ENCODE measurements at regions of chr6 and their contacts with region 1.

Region 1: GRCh38 chr6:166005944-166006899 is 161.4 kb downstream of the TBXT start:
- DNase-seq: peak; percentile 73
- ATAC-seq: peak; percentile 72 to 84

Region 2: DNA sequence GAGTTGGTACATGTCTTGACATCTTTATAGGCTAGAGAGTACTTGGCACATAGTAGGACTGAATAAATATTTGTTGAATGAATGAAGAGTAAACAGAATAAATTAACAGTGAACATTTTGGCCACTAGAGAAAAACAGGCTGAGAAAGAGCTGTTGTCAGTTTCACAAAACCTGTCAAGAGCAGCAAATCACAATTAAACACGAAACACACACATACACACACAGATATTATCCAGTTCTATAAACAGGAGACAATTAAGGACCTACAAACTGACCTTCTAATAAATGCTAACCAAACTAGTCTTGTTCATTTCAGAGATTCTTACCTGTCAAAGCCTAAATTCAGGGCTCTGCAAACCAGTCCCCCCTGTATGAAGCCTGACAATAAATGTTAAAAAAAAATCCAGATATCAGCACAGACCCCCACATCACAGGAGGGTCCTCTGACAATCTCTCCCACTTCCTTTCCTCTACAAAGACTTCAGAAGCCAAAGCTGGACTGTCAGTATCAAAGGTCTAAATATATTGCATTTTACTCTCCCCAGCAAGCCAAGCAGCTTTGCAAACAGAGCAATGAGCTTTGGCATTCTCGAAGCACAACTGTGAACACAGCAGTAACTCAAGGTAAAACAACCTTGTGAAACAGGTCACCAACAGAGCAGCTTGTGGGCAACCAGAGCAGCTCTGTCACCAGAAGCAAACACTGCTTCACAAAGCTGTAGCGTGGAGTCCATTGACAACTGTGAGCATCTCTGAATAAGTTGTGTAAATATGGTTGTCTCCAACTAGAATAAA is 68.5 kb before region 1 on chr6:
- intact Hi-C with region 1: no loop called
- DNase-seq: no peak
- ATAC-seq: no peak

Region 3: GRCh38 chr6:165950316-165950715 is 55.9 kb before region 1 on chr6:
- intact Hi-C with region 1: no loop called
- DNase-seq: no peak
- ATAC-seq: no peak

Region 4: DNA sequence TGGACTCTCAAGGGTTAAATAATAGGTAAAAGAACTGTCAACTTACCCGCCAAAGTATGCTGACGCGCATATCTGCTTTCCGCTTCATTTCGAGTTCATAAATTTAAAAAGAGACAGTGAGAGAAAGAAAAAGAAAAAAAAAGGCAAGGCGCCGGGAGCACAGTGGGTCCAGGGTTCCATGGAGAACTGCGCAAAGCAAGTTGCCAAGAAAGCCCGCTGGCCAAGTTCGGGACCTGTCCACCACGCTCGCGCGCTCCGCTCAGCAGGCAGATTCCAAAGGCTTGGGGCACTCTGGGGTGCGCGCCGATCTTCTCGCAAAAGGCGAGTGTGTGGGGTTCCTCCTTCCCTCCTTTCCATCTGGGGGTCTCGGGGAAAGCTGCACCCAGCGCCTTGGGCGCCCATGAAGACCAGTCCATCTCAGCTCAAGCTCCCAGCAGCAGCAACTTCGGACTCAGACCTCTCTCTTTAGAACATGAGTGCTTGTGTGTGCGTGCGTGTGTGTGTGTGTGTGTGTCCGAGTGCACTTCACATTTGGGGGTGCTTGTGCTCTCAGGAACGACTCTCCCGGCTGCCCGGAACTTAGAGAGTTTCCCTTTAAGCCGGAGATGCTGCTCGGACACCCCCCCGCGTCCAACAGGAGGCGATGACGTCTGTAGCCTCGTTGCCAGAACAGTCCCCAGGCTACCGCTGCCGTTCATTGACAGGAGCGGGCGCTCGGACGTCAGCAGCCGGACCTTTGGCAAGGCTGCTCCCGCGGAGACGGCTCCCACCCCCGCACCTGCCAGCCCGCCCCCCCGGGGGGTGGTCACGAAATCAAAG is 18.5 kb before region 1 on chr6:
- intact Hi-C with region 1: loop called in 1 of 2 experiments (anchors 1 kb)
- DNase-seq: peak; percentile 90
- ATAC-seq: peak; percentile 88 to 90

Region 5: DNA sequence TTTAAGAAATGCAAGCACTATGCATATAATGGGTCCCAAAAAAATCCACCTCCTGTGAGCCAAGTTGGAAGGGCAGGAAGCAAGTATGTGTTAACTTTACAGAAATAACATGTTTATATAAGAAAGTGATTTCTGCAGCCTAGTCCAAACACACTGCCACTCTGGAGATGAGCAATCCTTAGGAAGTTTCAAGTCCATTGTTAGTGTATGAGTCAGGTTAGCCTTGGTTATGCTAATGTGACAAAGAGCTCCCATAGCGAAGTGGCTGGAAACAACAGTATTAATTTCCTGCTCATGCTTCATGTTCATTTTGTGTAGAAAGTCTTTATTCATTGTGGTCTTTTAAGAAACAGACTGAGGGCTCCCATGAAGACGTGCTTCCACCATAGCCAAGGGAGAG is 40.0 kb after region 1 on chr6:
- intact Hi-C with region 1: no loop called
- DNase-seq: no peak
- ATAC-seq: peak in 1 of 2 donors; percentile 83

Measured in left cardiac atrium (tissue), 4 donors.